Activated B cell treated with CpG ODN at 0.5 μM for 24 hours (primary cell): ENCODE measurements at regions of chr13 and their contacts with region 1.

Region 1: DNA sequence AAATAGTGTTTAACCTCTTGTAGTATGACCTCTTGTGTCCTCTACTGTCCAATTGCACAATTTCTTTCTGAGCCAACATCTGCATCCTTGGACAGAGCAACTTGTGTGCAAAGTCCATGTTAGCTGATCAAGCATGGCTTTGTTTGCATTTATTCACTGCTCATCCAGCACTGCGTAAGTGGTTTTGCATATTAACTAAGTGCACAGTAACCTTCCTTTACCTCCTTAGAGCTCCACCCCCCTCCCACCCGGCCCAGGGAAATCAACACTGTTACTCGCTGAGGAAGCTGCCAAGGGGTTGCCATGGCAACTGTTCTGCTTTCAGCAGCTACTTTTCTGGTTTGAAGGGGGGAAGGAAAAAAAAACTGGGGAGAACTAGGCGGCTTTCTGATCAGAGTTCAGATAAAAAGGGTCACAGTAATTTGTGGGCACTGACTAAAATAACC is 153.5 kb upstream of the KLF12 start:
- DNase-seq: peak; percentile 32
- ATAC-seq: peak; percentile 52
- H3K4me3 Mint-ChIP-seq: peak overlapping the region; percentile 77
- H3K27ac Mint-ChIP-seq: peak overlapping the region; percentile 94
- H3K4me1 Mint-ChIP-seq: peaks cover 51% of the 10 kb centered on the region
- H3K27me3 Mint-ChIP-seq: no peaks in the 10 kb centered on the region
- CTCF ChIP-seq: no peak

Region 2: DNA sequence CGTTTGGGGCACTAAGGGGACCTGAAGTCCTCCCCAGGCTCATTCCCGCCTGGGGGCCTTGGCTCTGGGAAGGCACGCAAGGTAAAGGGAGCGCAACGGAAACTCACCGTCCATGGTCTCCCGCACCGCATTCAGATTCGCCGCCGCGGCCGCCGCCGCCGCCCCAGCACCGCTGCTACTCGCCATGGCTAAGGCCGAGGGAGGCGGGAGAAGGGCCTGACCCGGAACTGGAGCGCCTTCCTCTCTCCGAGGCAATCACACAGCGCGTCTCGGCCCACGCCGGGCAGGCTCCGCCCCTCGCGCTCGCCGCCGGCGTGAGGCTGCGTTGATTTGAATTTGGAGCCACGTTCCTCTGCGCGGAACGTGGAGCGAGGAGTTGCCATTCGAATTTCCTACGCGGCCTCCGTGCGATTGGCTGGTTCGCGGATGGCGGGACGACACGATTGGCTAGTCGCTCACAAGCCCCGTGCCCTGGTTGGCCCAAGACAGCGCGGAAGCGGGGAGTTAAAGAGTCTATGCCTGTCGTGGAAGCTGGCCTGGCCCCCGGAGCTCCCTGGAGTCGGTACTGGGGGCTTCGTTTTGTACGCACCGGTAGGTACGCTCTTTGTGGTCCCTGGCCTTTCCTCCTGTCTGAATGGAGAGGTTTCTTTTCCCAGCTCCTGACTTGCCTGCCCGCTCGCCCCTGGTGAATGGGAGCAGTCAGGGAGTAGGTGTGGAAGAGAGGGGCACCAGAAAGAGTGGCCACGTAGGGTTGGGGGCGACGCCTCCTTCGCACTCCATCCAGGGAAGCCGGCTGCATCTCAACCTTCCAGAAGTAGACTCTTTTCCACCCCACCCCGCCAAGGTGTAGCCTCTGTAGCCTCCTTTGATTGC is 1560.1 kb before region 1 on chr13 and contains the starts of genes BORA and MZT1:
- CTCF ChIA-PET with region 1: no interaction called
- POLR2A ChIA-PET with region 1: no interaction called
- intact Hi-C with region 1: loop called (anchors 2 kb)
- DNase-seq: peak; percentile 92
- ATAC-seq: peak; percentile 93
- H3K4me3 Mint-ChIP-seq: peak within 1 kb of the TSS; percentile 95
- H3K27ac Mint-ChIP-seq: peak within 1 kb of the TSS; percentile 84
- H3K4me1 Mint-ChIP-seq: peaks cover 48% of the 10 kb centered on the region
- H3K27me3 Mint-ChIP-seq: no peaks in the 10 kb centered on the region
- CTCF ChIP-seq: no peak
- total RNA-seq, gene BORA: 10.3 and 11.9 TPM in 2 replicates
- total RNA-seq, gene MZT1: 6.5 and 6.9 TPM in 2 replicates

Region 3: DNA sequence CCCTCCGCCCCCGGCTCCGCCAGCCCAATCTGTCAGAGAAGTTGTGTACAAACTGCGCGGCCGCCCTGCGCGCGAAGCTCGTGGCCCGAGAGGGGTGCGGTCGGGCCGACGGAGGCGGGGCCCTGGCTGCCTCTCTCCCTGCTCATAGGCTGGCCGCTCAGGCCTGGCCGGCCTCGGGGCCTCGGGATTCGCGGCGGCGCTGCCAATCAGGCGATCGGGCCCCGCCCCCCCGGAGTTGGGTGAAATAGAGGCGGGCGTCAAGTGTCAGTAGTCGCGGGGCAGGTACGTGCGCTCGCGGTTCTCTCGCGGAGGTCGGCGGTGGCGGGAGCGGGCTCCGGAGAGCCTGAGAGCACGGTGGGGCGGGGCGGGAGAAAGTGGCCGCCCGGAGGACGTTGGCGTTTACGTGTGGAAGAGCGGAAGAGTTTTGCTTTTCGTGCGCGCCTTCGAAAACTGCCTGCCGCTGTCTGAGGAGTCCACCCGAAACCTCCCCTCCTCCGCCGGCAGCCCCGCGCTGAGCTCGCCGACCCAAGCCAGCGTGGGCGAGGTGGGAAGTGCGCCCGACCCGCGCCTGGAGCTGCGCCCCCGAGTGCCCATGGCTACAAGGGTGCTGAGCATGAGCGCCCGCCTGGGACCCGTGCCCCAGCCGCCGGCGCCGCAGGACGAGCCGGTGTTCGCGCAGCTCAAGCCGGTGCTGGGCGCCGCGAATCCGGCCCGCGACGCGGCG is 1228.8 kb before region 1 on chr13 and contains the start of gene KLF5:
- CTCF ChIA-PET with region 1: no interaction called
- POLR2A ChIA-PET with region 1: no interaction called
- intact Hi-C with region 1: loop called (anchors 5 kb)
- DNase-seq: peak; percentile 93
- ATAC-seq: peak; percentile 99
- H3K4me3 Mint-ChIP-seq: peak within 1 kb of the TSS; percentile 91
- H3K27ac Mint-ChIP-seq: peak within 1 kb of the TSS; percentile 54
- H3K4me1 Mint-ChIP-seq: peaks cover 18% of the 10 kb centered on the region
- H3K27me3 Mint-ChIP-seq: peaks cover 38% of the 10 kb centered on the region
- CTCF ChIP-seq: no peak
- total RNA-seq, gene KLF5: 0.35 and 0.69 TPM in 2 replicates

Region 4: GRCh38 chr13:73835138-73835721 is 452.5 kb before region 1 on chr13:
- CTCF ChIA-PET with region 1: interaction called, 118 read pairs
- POLR2A ChIA-PET with region 1: interaction called, 6 read pairs
- intact Hi-C with region 1: loop called (anchors 1 kb)
- DNase-seq: no peak
- ATAC-seq: peak; percentile 67
- H3K4me3 Mint-ChIP-seq: no peak overlapping the region
- H3K27ac Mint-ChIP-seq: no peak overlapping the region
- H3K4me1 Mint-ChIP-seq: peaks cover 9% of the 10 kb centered on the region
- H3K27me3 Mint-ChIP-seq: no peaks in the 10 kb centered on the region
- CTCF ChIP-seq: no peak

Region 5: DNA sequence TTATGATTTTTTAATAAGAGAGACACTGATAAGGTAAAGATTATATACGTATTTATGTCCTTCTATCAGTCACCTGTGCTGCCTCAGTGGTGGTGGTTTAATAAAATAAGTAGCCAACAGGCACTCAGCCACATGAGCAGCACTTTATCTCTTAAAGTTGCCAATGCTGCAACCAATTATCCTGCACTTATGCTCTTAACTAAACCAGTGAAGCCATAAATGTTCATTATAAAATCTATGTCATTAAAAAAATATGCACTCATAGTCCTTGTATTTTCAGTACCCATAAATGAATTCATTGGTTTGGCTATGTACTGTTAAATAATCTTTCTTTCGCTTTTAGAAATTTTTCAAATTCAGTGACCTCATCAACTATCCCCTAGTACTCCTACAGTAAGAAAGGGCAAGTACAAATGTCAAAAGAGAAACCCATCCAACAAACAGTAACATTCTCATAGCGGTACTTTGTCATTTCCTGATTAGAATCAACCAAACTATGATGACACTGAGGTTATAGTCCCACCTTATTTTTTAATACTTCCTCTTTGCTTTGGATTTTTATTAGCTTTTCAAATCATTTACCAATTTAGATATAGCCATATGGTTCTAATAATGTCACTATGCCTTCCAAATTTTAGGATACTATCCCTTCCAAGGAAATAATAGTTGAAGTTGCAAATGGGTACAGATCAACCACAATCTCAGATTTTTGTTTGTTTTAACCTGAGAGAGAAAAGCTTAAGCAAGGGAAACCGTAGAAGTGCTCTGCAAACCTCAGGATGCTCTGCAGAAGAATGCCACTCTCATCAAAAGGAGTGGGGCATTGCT is 344.4 kb before region 1 on chr13:
- CTCF ChIA-PET with region 1: interaction called, 18 read pairs
- POLR2A ChIA-PET with region 1: interaction called, 6 read pairs
- intact Hi-C with region 1: loop called (anchors 1 kb)
- DNase-seq: no peak
- ATAC-seq: peak; percentile 84
- H3K4me3 Mint-ChIP-seq: peak overlapping the region; percentile 13
- H3K27ac Mint-ChIP-seq: peak overlapping the region; percentile 59
- H3K4me1 Mint-ChIP-seq: peaks cover 36% of the 10 kb centered on the region
- H3K27me3 Mint-ChIP-seq: no peaks in the 10 kb centered on the region
- CTCF ChIP-seq: no peak

Region 6: GRCh38 chr13:74026753-74027152 is 261.0 kb before region 1 on chr13:
- CTCF ChIA-PET with region 1: interaction called, 3 read pairs
- POLR2A ChIA-PET with region 1: no interaction called
- intact Hi-C with region 1: loop called (anchors 2 kb)
- DNase-seq: peak; percentile 26
- ATAC-seq: peak; percentile 97
- H3K4me3 Mint-ChIP-seq: peak overlapping the region; percentile 81
- H3K27ac Mint-ChIP-seq: peak overlapping the region; percentile 97
- H3K4me1 Mint-ChIP-seq: peaks cover 70% of the 10 kb centered on the region
- H3K27me3 Mint-ChIP-seq: no peaks in the 10 kb centered on the region
- CTCF ChIP-seq: no peak

Region 7: GRCh38 chr13:75647126-75647784 is 1359.5 kb after region 1 on chr13:
- CTCF ChIA-PET with region 1: no interaction called
- POLR2A ChIA-PET with region 1: no interaction called
- intact Hi-C with region 1: loop called (anchors 5 kb)
- DNase-seq: no peak
- ATAC-seq: peak; percentile 90
- H3K4me3 Mint-ChIP-seq: peak overlapping the region; percentile 33
- H3K27ac Mint-ChIP-seq: peak overlapping the region; percentile 84
- H3K4me1 Mint-ChIP-seq: peaks cover 33% of the 10 kb centered on the region
- H3K27me3 Mint-ChIP-seq: no peaks in the 10 kb centered on the region
- CTCF ChIP-seq: no peak